K562 (cell line): ENCODE measurements at regions of chrX and their contacts with region 1.

Region 1: GRCh38 chrX:57595381-57595811 is 3.6 kb downstream of the ZXDB start:
- DNase-seq: no peak
- ATAC-seq: no peak
- H3K4me3 ChIP-seq: no peak overlapping the region
- H3K27ac ChIP-seq: no peak overlapping the region
- H3K4me1 ChIP-seq: peaks cover 2 to 9% of the 10 kb centered on the region in 2 experiments; a peak in 2 of 5 replicates
- H3K27me3 ChIP-seq: no peaks in the 10 kb centered on the region
- CTCF ChIP-seq: no peak
- EP300 ChIP-seq: no peak
- POLR2A ChIP-seq: no peak
- RAD21 ChIP-seq: no peak

Region 2: GRCh38 chrX:57156397-57157049 is 438.9 kb before region 1 on chrX:
- CTCF ChIA-PET with region 1: no interaction called
- POLR2A ChIA-PET with region 1: no interaction called
- in situ Hi-C with region 1: no loop called
- intact Hi-C with region 1: loop called (anchors 5 kb)
- DNase-seq: peak in 3 of 4 experiments; percentile 8 to 49 (median 23)
- ATAC-seq: peak; percentile 94
- H3K4me3 ChIP-seq: no peak overlapping the region
- H3K27ac ChIP-seq: no peak overlapping the region
- H3K4me1 ChIP-seq: peaks cover 0 to 12% of the 10 kb centered on the region in 2 experiments; a peak in 3 of 5 replicates
- H3K27me3 ChIP-seq: no peaks in the 10 kb centered on the region
- CTCF ChIP-seq: peak; percentile 40 to 56 (median 46); a peak in 5 of 6 replicates
- EP300 ChIP-seq: no peak
- POLR2A ChIP-seq: no peak
- RAD21 ChIP-seq: peak; percentile 12 to 61; a peak in 2 of 4 replicates

Region 3: GRCh38 chrX:57984620-57985019 is 389.2 kb after region 1 on chrX:
- CTCF ChIA-PET with region 1: no interaction called
- POLR2A ChIA-PET with region 1: no interaction called
- in situ Hi-C with region 1: no loop called
- intact Hi-C with region 1: no loop called
- DNase-seq: no peak
- ATAC-seq: no peak
- H3K4me3 ChIP-seq: no peak overlapping the region
- H3K27ac ChIP-seq: no peak overlapping the region
- H3K4me1 ChIP-seq: no peaks in the 10 kb centered on the region
- H3K27me3 ChIP-seq: no peaks in the 10 kb centered on the region
- CTCF ChIP-seq: no peak
- EP300 ChIP-seq: no peak
- POLR2A ChIP-seq: no peak
- RAD21 ChIP-seq: no peak